ENCODE measurements at regions of chr11 and their contacts with region 1.

Region 1: DNA sequence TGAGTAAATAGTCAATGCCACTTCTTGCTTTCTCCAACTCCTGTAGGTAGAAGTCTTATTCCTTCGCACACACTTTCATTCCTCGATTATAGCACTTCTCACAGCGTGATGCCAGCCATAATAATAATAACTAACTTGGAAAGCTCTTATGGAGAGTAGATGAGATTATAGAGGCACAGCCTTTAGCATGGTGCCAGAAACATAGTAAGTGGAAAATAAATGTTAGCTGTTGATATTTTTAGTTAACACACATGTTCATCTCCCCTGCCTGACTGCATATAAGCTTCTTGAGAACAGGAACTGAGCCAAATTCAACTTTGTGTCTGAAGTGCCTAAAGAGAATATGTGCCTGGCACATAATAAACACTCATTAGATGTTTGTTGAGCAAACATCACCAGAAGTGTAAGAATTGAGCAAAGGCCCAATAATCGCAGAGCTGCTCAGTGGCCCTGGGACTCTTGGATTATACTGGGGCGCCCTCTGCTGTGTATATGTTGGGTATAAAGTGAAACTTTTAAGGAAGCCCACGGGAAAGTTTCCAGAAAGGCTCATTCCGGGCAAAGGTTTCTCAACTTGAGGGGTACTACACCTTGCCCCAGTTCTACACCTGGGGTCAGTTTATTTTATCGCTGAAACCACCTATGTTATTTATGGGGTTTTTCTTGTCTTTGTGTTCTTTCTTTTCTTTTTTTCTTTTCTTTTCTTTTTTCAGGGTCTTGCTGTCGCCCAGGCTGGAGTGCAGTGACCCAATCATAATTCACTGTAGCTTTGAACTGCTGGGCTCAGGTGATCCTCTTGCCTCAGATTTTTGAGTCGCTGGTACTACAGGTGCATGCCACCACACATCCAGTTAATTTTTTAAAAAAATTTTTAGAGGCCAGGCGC is 22.3 kb downstream of the SLN start:
- DNase-seq: no peak
- ATAC-seq: peak; percentile 95
- H3K4me3 ChIP-seq: no peak overlapping the region
- H3K27ac ChIP-seq: no peak overlapping the region
- H3K4me1 ChIP-seq: no peaks in the 10 kb centered on the region
- H3K27me3 ChIP-seq: no peaks in the 10 kb centered on the region
- CTCF ChIP-seq: peak; percentile 50 to 86 (median 63)
- EP300 ChIP-seq: no peak
- POLR2A ChIP-seq: no peak
- RAD21 ChIP-seq: peak; percentile 88

Region 2: DNA sequence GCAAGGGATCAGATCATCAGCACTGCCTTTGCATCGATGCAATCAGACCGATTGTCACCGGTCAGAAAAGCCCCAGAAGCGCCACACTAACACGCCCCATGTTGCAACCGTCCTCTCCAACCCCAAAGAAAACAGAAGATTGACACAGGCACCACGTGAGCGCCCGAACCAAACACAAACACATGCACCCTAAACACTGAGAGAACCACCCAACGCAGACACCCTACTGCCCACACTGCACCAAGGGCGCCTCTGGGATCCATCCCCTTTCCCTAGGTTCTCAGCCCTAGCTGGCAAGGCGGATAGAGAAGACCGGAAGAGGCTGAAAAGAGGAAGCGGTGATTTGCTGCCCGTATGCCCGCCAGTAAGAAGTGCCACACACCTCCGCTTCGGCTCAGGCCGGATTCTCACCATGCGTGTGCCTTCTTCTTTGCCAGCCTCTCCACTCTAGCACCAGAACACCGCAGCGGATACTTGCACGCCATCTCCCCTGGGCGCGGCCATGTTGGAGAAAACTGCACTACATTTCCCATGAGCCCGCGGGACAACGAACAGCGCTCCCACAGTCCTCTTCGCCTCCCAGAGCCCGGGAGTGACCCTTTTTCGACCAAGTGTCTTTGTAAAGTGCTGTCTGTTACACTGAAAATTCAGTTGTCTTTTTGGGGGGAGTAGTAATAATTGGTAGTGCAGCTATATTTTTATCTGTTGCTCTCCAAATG is 124.2 kb before region 1 on chr11 and contains the start of gene ALKBH8:
- CTCF ChIA-PET with region 1: interaction called, 536 read pairs
- POLR2A ChIA-PET with region 1: interaction called, 3 read pairs
- RAD21 ChIA-PET with region 1: interaction called, 120 read pairs
- SMC1A ChIA-PET with region 1: interaction called, 249 read pairs
- in situ Hi-C with region 1: no loop called
- intact Hi-C with region 1: loop called (anchors 1 kb)
- DNase-seq: peak; percentile 50
- ATAC-seq: peak; percentile 89
- H3K4me3 ChIP-seq: peak within 1 kb of the TSS; percentile 71
- H3K27ac ChIP-seq: peak within 1 kb of the TSS; percentile 89
- H3K4me1 ChIP-seq: peaks cover 25% of the 10 kb centered on the region
- H3K27me3 ChIP-seq: no peaks in the 10 kb centered on the region
- CTCF ChIP-seq: no peak; a peak in 1 of 6 replicates
- EP300 ChIP-seq: no peak
- POLR2A ChIP-seq: peak; percentile 73
- RAD21 ChIP-seq: no peak
- polyA plus RNA-seq, gene ALKBH8: 4.6 to 4.7 TPM

Region 3: GRCh38 chr11:107598225-107599139 is 91.1 kb before region 1 on chr11:
- CTCF ChIA-PET with region 1: interaction called, 206 read pairs
- POLR2A ChIA-PET with region 1: no interaction called
- RAD21 ChIA-PET with region 1: interaction called, 104 read pairs
- SMC1A ChIA-PET with region 1: interaction called, 109 read pairs
- in situ Hi-C with region 1: no loop called
- intact Hi-C with region 1: loop called (anchors 2 kb)
- DNase-seq: no peak
- ATAC-seq: peak; percentile 99
- H3K4me3 ChIP-seq: no peak overlapping the region
- H3K27ac ChIP-seq: no peak overlapping the region
- H3K4me1 ChIP-seq: no peaks in the 10 kb centered on the region
- H3K27me3 ChIP-seq: peaks cover 0 to 4% of the 10 kb centered on the region in 2 experiments; a peak in 1 of 4 replicates
- CTCF ChIP-seq: peak; percentile 60 to 77 (median 66)
- EP300 ChIP-seq: no peak
- POLR2A ChIP-seq: no peak
- RAD21 ChIP-seq: 0 out of 2 replicates have a peak, but pooled peaks have one; percentile 25

Region 4: DNA sequence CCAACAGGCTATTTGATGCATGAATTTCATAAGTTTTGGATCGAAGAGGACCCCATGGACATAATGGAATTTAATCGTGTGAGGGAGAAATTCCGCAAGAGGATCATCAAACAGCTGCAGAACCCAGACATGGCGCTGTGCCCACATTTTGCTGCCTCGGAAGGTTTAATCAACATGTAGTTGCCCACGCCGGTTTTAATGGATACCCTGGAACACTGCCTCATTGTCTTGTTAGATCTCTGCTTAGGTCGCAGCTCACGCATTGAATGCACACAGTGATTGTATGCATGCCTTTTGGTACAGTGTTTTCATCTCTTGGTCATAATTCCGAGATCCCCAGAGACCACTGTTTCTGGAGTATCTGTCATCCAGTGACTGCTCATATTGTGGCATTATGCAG is 24.5 kb before region 1 on chr11:
- CTCF ChIA-PET with region 1: interaction called, 58 read pairs
- POLR2A ChIA-PET with region 1: no interaction called
- RAD21 ChIA-PET with region 1: interaction called, 15 read pairs
- SMC1A ChIA-PET with region 1: interaction called, 57 read pairs
- in situ Hi-C with region 1: no loop called
- intact Hi-C with region 1: no loop called
- DNase-seq: no peak
- ATAC-seq: no peak
- H3K4me3 ChIP-seq: no peak overlapping the region
- H3K27ac ChIP-seq: no peak overlapping the region
- H3K4me1 ChIP-seq: no peaks in the 10 kb centered on the region
- H3K27me3 ChIP-seq: peaks cover 0 to 2% of the 10 kb centered on the region in 2 experiments; a peak in 2 of 4 replicates
- CTCF ChIP-seq: no peak
- EP300 ChIP-seq: no peak
- POLR2A ChIP-seq: no peak
- RAD21 ChIP-seq: no peak

Region 5: GRCh38 chr11:107731941-107732688 is 42.6 kb after region 1 on chr11:
- CTCF ChIA-PET with region 1: interaction called, 8 read pairs
- POLR2A ChIA-PET with region 1: no interaction called
- RAD21 ChIA-PET with region 1: no interaction called
- SMC1A ChIA-PET with region 1: interaction called, 6 read pairs
- in situ Hi-C with region 1: loop called (anchors 5 kb)
- intact Hi-C with region 1: no loop called
- DNase-seq: peak; percentile 21
- ATAC-seq: peak; percentile 94
- H3K4me3 ChIP-seq: no peak overlapping the region
- H3K27ac ChIP-seq: no peak overlapping the region
- H3K4me1 ChIP-seq: no peaks in the 10 kb centered on the region; the same call in 1 of the 2 replicates
- H3K27me3 ChIP-seq: no peaks in the 10 kb centered on the region; a peak in 1 of 4 replicates
- CTCF ChIP-seq: no peak
- EP300 ChIP-seq: no peak
- POLR2A ChIP-seq: no peak
- RAD21 ChIP-seq: no peak

Measured in GM12878 (cell line).